Activated B cell treated with CpG ODN at 0.5 μM for 24 hours (primary cell): ENCODE measurements at regions of chr4 and their contacts with region 1.

Region 1: DNA sequence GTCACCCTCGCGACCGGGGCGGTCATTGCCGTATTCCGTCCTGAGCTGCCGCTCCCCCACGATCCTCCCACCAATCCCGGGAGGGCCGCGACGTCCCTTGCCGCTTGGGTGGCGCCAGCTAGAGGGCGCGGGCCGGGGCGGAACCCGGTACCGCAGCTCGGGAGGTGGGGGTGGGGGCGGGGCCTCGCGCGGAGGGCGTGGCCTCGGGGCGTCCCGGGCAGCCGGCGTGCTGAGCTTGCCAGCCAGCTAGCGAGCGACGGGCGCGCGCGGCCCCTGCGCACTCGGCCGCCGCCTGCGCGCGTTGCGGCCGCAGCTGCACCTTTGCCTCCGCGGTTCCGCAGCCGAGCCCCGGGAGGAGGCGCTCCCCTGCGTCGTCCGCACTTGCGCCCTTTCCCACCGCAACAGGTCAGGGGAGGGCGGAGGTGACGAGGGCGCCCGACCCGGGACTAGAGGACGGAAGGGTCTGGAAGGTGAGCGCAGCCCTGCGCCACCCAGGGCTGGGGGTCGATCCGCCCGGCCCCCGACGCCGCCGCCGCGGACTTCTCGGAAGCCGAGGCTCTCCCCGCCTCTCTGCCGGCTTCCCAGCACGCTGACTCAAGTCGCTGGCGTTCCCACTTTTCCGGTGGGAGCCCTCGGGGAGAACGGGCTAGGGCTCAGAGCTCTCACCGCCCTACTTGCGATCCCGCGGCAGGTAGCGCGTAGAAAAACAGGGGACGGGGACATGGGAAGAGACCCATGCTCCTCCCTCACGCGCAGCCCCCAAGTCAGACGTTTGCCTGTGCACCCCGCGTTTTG is at the start of gene AFF1:
- DNase-seq: peak; percentile 79
- ATAC-seq: peak; percentile 71
- H3K4me3 Mint-ChIP-seq: peak within 1 kb of the TSS; percentile 94
- H3K27ac Mint-ChIP-seq: peak within 1 kb of the TSS; percentile 96
- H3K4me1 Mint-ChIP-seq: peaks cover 56% of the 10 kb centered on the region
- H3K27me3 Mint-ChIP-seq: no peaks in the 10 kb centered on the region
- CTCF ChIP-seq: no peak
- total RNA-seq, gene AFF1: 60.0 and 60.8 TPM in 2 replicates

Region 2: DNA sequence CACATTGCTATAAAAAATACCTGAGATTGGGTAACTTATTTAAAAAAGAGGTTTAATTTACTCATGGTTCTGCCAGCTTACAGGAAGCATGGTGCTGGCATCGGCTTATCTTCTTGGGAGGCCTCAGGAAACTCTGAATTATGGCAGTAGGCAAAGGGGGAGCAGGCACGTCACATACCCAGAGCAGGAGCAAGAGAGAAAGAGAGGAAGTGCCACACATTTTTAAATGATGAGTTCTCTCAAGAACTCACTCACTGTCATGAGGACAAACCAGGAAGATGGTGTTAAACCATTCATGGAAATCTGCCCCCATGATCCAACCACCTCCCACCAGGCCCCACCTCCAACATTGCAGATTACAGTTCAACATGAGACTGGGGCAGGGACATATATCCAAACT is 10.2 kb before region 1 on chr4:
- CTCF ChIA-PET with region 1: interaction called, 68 read pairs
- POLR2A ChIA-PET with region 1: interaction called, 17 read pairs
- intact Hi-C with region 1: loop called (anchors 1 kb)
- DNase-seq: no peak
- ATAC-seq: no peak
- H3K4me3 Mint-ChIP-seq: no peak overlapping the region
- H3K27ac Mint-ChIP-seq: no peak overlapping the region
- H3K4me1 Mint-ChIP-seq: peaks cover 15% of the 10 kb centered on the region
- H3K27me3 Mint-ChIP-seq: no peaks in the 10 kb centered on the region
- CTCF ChIP-seq: no peak

Region 3: DNA sequence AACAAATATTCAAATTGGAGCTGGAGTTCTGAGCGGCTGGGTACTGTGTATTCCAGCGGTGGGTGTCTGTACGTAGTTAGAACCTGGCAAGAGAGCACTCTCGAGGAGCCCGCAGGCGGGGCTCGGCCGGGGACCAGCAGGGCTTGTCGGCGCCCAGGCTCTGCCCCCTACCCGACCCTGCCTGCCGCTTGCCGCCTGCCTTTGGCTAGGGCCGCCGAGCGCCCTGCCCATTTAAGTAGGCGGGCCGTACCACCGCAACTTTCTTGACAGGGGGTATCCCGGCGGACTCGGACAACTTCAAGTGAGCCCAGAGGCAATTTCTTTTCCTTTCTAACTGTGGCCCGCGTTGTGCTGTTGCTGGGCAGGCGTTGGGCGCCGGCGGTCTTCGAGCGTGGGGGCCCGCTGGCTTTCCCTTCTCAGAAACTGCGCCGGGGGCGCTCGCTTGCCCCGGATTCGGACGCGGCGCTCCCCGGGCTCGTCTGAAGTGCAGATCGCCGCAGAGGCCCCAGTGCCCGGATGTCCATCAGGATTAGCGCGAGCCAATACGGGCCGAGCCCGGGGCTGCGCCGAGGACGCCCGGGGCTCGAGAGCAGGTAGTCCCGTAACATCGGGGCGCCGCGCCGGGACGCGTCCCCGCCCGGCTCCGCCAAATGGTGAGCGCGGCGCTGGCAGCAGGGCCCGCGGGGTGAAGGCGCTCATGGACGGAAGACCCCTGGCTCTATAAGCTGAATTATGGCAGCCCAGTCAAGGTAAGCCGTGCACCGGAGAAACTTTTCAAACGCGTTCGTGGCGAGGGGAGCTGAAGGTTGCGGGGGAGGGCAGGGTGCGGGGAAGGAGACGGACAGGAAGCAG is 71.9 kb after region 1 on chr4:
- CTCF ChIA-PET with region 1: interaction called, 26 read pairs
- POLR2A ChIA-PET with region 1: interaction called, 256 read pairs
- intact Hi-C with region 1: loop called (anchors 1 kb)
- DNase-seq: peak; percentile 93
- ATAC-seq: peak; percentile 83
- H3K4me3 Mint-ChIP-seq: peak overlapping the region; percentile 97
- H3K27ac Mint-ChIP-seq: peak overlapping the region; percentile 98
- H3K4me1 Mint-ChIP-seq: peaks cover 56% of the 10 kb centered on the region
- H3K27me3 Mint-ChIP-seq: no peaks in the 10 kb centered on the region
- CTCF ChIP-seq: no peak

Region 4: DNA sequence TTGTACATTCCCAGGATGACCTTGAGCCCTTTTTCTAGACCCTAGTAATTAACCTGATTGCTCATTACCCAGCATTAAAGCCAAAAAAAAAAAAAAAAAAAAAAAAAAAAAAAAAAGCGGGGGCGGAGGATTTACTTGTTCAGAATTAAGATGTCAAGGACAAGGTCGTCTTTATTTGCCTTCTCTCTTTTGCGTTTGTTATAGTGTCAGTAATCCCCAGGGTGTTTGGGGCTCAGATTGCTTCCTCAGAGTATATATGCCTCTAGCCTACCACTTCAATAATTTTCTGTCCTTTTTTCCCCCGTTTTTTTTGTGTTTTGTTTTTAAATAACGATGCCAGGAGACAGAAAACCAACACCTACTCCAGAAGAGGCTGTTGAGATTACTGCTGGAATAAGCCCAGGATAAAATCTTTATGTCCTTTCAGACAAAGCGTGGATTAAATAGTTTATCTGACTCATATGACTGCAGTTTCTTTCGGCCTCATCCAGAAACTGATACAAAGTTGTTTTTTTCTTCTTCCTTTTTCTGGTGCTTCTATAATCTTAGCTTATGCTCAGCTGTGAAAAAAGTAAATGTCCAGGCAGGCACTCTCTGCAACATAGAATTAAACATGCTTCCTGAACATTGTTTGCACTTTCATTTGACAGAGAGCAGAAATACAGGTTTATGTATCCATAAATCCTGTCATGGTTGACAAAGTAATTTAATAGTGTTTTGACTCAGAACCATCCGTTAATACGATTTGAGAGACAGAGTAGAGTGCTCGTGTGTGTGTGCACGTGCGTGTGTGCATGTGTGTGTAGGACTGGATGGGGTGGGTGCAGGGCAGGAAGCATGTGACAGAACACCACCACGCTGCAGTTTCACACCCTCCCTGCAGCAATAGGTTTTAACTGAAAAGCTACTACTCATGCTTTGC is 138.5 kb after region 1 on chr4:
- CTCF ChIA-PET with region 1: interaction called, 3 read pairs
- POLR2A ChIA-PET with region 1: interaction called, 29 read pairs
- intact Hi-C with region 1: loop called (anchors 1 kb)
- DNase-seq: peak; percentile 35
- ATAC-seq: peak; percentile 84
- H3K4me3 Mint-ChIP-seq: peak overlapping the region; percentile 82
- H3K27ac Mint-ChIP-seq: peak overlapping the region; percentile 93
- H3K4me1 Mint-ChIP-seq: peaks cover 40% of the 10 kb centered on the region
- H3K27me3 Mint-ChIP-seq: no peaks in the 10 kb centered on the region
- CTCF ChIP-seq: no peak

Region 5: GRCh38 chr4:87390891-87391575 is 456.1 kb after region 1 on chr4 and contains the start of gene HSD17B11:
- CTCF ChIA-PET with region 1: no interaction called
- POLR2A ChIA-PET with region 1: interaction called, 4 read pairs
- intact Hi-C with region 1: loop called (anchors 10 kb)
- DNase-seq: peak; percentile 70
- ATAC-seq: peak; percentile 99
- H3K4me3 Mint-ChIP-seq: peak within 1 kb of the TSS; percentile 97
- H3K27ac Mint-ChIP-seq: peak within 1 kb of the TSS; percentile 96
- H3K4me1 Mint-ChIP-seq: peaks cover 48% of the 10 kb centered on the region
- H3K27me3 Mint-ChIP-seq: no peaks in the 10 kb centered on the region
- CTCF ChIP-seq: no peak
- total RNA-seq, gene HSD17B11: 26.2 and 28.4 TPM in 2 replicates

Region 6: GRCh38 chr4:88591787-88592599 is 1657.0 kb after region 1 on chr4 and contains the start of gene HERC3:
- CTCF ChIA-PET with region 1: no interaction called
- POLR2A ChIA-PET with region 1: no interaction called
- intact Hi-C with region 1: loop called (anchors 10 kb)
- DNase-seq: peak; percentile 87
- ATAC-seq: peak; percentile 93
- H3K4me3 Mint-ChIP-seq: peak within 1 kb of the TSS; percentile 94
- H3K27ac Mint-ChIP-seq: peak within 1 kb of the TSS; percentile 84
- H3K4me1 Mint-ChIP-seq: peaks cover 32% of the 10 kb centered on the region
- H3K27me3 Mint-ChIP-seq: no peaks in the 10 kb centered on the region
- CTCF ChIP-seq: no peak
- total RNA-seq, gene HERC3: 23.8 and 27.5 TPM in 2 replicates